ENCODE measurements at regions of chr13 and their contacts with region 1.

Region 1: DNA sequence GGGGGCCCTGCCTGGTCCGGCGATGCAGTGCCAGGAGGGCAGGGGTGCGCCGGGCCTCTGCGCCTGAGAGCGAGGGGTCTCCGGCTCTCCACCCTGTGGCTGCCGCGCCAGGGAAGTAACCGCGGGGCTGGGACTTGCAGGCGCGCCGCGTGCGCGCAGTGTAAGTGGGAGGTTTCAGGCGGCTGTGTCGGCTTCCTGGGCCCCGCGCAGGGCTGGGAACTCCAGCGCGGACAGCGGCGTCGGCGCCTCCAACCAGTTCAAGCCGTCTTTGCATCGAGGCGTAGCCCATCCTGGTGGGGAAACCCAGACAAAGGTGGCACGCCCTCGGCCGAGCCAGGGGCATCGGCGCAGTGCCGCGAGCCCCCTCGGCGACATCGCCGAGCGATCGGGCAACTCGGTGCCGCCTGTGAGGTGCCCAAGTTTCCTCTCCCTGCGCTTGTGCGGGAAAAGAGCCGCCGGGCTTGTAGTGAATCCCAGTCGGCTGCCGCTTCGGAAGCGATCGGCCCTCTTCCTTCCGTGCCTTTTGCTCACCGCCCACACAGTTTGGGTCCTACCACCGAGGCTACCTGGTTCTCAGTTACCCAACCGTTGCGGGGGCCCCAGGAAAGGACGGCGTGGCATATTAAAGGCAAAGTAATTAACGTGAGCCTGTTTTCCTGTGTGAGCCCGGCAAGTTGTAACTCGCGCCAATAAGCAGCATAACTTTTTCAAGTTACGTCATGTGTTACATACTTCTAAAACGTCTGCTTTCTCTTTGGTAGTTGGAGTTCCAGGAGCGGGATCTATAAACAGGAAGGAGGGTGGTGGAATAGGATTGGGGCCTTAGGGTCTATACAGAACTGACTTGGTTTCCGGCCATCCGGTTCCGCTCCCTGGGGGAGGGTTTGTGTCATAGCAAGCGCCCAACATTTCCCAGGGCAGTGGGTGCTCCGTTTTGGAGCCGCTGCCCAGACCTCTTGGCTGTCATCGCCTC is 1.2 kb downstream of the LRCH1 start:
- DNase-seq: peak; percentile 89
- ATAC-seq: peak; percentile 84

Region 2: GRCh38 chr13:46492946-46493345 is 61.2 kb before region 1 on chr13:
- intact Hi-C with region 1: loop called (anchors 5 kb)
- DNase-seq: no peak
- ATAC-seq: no peak

Region 3: GRCh38 chr13:46577696-46578589 is 23.8 kb after region 1 on chr13:
- intact Hi-C with region 1: loop called (anchors 2 kb)
- DNase-seq: no peak
- ATAC-seq: no peak

Region 4: GRCh38 chr13:46605825-46606554 is 51.8 kb after region 1 on chr13:
- intact Hi-C with region 1: loop called (anchors 5 kb)
- DNase-seq: no peak
- ATAC-seq: no peak

Region 5: DNA sequence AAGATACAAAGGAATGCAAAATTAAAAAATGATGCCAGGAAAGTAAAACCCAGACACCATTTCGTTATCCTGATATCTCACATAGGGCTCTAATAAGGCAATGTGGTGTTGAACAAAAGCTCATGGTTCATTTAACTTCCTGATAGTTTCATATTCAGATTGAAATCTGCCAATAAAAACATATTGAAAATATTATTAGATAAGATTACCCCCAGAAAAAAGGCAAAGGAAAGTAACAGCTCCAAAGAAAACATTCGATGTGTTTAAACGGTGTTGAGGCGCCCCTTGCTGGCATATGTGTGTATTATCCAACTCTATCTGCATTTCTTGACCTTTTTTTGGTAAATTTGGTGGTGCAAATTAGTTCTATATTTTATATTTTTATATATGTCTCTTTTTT is 166.9 kb after region 1 on chr13:
- intact Hi-C with region 1: loop called (anchors 1 kb)
- DNase-seq: no peak
- ATAC-seq: no peak

Region 6: DNA sequence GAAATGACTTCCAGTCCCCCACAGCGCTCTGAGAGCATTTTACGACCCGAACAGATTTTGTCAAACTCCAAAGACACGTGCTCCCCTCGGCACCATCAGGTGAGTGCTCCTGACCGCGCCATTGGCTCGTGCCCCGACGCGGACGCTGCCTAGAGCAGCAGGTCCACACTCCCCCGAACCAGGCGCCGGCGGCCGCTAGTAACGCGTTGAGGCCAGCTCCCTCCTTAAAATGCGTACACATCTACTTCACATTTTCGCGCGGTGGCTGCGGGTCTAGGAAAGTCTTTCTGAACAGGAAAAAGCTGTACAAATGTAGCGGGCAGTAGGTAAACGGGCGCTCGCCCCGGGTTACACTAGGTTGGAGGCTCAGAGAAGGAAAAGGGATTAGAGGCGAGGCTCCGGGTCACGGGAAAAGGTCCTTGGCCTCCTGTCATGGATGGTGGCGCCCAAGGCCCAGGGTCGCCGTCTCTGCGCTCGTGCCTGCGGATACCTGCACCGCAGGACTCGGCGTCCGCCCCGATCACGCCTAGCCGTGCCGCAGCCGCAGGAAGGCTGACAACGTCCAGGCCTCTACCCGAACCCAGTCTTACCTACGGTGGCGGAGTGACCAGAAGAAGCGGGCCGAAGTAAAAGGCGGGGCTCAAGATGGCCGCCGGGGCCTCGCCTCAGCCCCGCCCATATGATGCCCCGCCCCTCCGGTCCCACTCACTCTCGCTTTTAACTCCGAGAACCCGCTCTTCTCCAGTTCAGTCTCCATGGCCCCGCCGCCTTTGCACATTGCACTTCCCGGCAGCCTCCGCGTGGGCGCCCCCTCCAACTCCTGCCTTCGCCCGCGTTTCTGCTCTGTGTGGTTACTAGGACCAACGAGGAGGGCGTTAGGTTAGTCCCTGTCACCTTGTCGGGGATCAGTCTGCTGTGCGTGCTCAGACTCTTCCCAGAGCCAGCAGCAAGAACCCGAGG is 242.6 kb after region 1 on chr13 and contains the start of gene ESD:
- intact Hi-C with region 1: loop called (anchors 5 kb)
- DNase-seq: peak; percentile 97
- ATAC-seq: peak; percentile 100
- total RNA-seq, gene ESD: 106 TPM